A549 (cell line): ENCODE measurements at regions of chr19 and their contacts with region 1.

Region 1: DNA sequence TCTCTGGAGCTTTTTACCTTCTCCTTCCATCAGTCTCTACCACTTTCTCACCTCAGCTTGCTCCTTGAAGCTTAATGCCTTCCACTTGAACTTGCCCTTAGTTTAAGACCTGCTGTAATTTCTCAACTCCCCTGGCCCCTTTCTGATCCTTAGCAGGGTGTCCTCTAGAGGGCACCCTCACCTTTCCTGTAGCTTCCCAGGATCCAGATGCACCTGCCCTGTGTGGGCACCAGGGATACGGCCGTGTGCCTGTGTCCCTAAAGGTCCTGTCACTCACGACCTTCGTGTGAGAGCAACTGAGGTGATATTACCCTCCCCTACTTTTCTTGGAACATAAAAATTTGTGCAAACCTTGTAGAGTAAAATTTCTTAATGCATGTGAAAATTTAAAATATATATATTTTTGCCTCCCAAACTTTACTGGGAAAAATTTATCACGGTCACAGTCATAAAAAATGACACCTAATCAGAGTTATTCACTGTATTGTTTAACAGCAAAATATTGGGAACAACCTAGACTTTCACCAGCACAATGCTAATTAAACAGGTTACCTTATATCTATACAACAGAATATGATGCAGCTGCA is 46.4 kb downstream of the PSG3 start:
- DNase-seq: peak; percentile 85 to 98
- ATAC-seq: peak; percentile 97 to 99
- H3K4me3 ChIP-seq: no peak overlapping the region
- H3K27ac ChIP-seq: no peak overlapping the region
- H3K4me1 ChIP-seq: no peaks in the 10 kb centered on the region
- CTCF ChIP-seq: peak; percentile 99
- EP300 ChIP-seq: no peak
- POLR2A ChIP-seq: no peak
- RAD21 ChIP-seq: peak; percentile 97 to 99

Region 2: GRCh38 chr19:42553292-42554045 is 140.4 kb before region 1 on chr19:
- CTCF ChIA-PET with region 1: no interaction called
- POLR2A ChIA-PET with region 1: no interaction called
- DNase-seq: no peak
- ATAC-seq: no peak; a peak in 1 of 6 replicates
- H3K4me3 ChIP-seq: no peak overlapping the region
- H3K27ac ChIP-seq: no peak overlapping the region
- H3K4me1 ChIP-seq: no peaks in the 10 kb centered on the region
- CTCF ChIP-seq: no peak
- EP300 ChIP-seq: no peak
- POLR2A ChIP-seq: no peak
- RAD21 ChIP-seq: no peak

Region 3: GRCh38 chr19:42657556-42657955 is 36.3 kb before region 1 on chr19:
- CTCF ChIA-PET with region 1: interaction called, 16 read pairs
- POLR2A ChIA-PET with region 1: no interaction called
- DNase-seq: no peak
- ATAC-seq: no peak
- H3K4me3 ChIP-seq: no peak overlapping the region
- H3K27ac ChIP-seq: no peak overlapping the region
- H3K4me1 ChIP-seq: no peaks in the 10 kb centered on the region
- CTCF ChIP-seq: no peak
- EP300 ChIP-seq: no peak
- POLR2A ChIP-seq: no peak
- RAD21 ChIP-seq: no peak

Region 4: DNA sequence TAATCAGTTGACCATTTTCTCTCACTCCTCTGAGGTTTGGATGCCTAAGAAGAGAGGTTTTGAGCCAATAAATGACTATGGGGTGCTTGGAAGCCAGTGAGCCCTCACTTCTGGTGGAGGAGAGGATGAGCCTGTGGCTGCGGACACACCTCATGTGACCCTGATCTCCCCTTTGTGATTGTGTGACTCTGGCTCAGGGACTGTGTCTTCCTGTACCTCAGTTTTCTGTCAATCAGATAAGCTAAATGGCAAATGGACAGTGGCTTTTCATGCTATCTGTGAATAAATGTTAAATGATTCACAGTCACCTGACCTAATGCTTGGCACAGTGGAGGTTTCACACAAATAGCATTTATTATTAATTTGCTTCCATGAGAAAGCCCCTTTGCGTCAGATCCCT is 68.9 kb after region 1 on chr19:
- CTCF ChIA-PET with region 1: interaction called, 16 read pairs
- POLR2A ChIA-PET with region 1: no interaction called
- DNase-seq: no peak
- ATAC-seq: no peak
- H3K4me3 ChIP-seq: no peak overlapping the region
- H3K27ac ChIP-seq: peak overlapping the region; percentile 45 to 66; a peak in 5 of 6 replicates
- H3K4me1 ChIP-seq: peaks cover 31% of the 10 kb centered on the region
- CTCF ChIP-seq: no peak
- EP300 ChIP-seq: no peak
- POLR2A ChIP-seq: no peak
- RAD21 ChIP-seq: no peak

Region 5: GRCh38 chr19:42872578-42872977 is 178.7 kb after region 1 on chr19:
- CTCF ChIA-PET with region 1: interaction called, 10 read pairs
- POLR2A ChIA-PET with region 1: no interaction called
- DNase-seq: no peak
- ATAC-seq: no peak
- H3K4me3 ChIP-seq: no peak overlapping the region
- H3K27ac ChIP-seq: 0 out of 6 replicates have a peak overlapping the region, but pooled peaks of 1 of the 2 experiments have one; percentile 0
- H3K4me1 ChIP-seq: peaks cover 22% of the 10 kb centered on the region
- CTCF ChIP-seq: no peak
- EP300 ChIP-seq: no peak
- POLR2A ChIP-seq: no peak
- RAD21 ChIP-seq: peak in 1 of 2 experiments; percentile 29; a peak in 1 of 5 replicates